Ascending aorta (tissue), 2 donors: ENCODE measurements at regions of chr14 and their contacts with region 1.

Region 1: GRCh38 chr14:52299692-52300278 is 14.3 kb upstream of the PTGER2 start:
- DNase-seq: no peak
- H3K4me3 ChIP-seq: no peak overlapping the region
- H3K27ac ChIP-seq: no peak overlapping the region
- H3K4me1 ChIP-seq: no peaks in the 10 kb centered on the region
- H3K27me3 ChIP-seq: no peaks in the 10 kb centered on the region
- CTCF ChIP-seq: peak; percentile 49 to 74 (median 52)

Region 2: DNA sequence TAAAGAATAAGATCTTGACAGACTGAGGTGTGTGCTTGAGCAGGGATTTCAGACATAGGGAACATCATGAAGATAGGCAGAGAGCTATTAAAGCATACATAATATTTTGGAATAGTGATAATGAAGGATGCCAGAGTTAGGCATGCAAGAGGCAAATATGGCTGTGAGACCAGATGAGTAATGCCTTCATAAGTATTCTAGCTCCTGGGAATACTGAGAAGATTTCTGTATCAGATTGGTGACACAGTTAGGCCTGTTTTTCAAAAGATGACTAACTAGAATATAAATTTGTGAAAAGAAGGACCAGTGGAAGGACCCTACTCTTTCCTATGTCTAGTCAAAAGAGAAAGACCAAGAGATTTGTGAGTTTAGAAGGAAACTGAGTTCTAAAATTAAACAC is 143.7 kb after region 1 on chr14:
- intact Hi-C with region 1: no loop called
- DNase-seq: no peak
- H3K4me3 ChIP-seq: no peak overlapping the region
- H3K27ac ChIP-seq: no peak overlapping the region
- H3K4me1 ChIP-seq: no peaks in the 10 kb centered on the region
- H3K27me3 ChIP-seq: no peaks in the 10 kb centered on the region
- CTCF ChIP-seq: no peak

Region 3: DNA sequence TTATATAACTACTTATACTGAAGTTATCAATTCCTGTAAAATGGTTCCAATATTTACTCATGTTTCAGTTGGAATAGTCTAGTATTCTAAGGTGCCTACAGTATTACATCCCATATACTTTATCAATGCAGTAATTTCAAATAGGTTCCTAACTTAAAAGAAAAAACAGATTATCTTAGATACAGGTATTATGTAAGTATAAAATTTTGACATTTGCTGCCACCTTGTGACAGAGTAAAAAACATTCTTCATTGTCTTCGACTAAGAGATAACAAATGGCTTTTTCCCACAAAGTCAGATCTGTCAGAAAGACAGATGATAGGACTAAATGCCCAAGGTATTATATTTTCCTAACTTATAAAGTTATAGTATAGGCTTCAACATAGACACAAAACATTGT is 173.8 kb after region 1 on chr14:
- intact Hi-C with region 1: loop called (anchors 1 kb)
- DNase-seq: no peak
- H3K4me3 ChIP-seq: no peak overlapping the region
- H3K27ac ChIP-seq: no peak overlapping the region
- H3K4me1 ChIP-seq: no peaks in the 10 kb centered on the region
- H3K27me3 ChIP-seq: no peaks in the 10 kb centered on the region
- CTCF ChIP-seq: peak; percentile 17 to 31 (median 21)

Region 4: DNA sequence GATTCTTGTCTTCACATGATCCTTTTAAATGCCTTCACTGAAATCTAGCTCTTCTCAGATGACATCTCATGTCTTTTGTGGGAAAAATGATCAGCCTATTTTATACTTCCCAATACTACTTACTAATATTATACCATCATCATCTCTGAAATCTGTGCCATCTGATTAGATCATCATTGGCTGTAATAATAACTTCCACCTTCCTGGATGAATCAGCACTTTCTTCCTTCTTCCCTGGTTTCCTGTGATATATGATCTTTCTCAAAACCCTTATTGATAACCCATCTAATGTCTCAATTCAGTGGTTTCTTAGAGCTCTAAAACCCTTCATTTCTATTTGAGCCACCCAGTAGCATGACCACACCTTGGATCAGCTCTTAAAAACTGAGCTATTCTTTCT is 283.8 kb after region 1 on chr14:
- intact Hi-C with region 1: no loop called
- DNase-seq: no peak
- H3K4me3 ChIP-seq: no peak overlapping the region
- H3K27ac ChIP-seq: no peak overlapping the region
- H3K4me1 ChIP-seq: no peaks in the 10 kb centered on the region
- H3K27me3 ChIP-seq: no peaks in the 10 kb centered on the region
- CTCF ChIP-seq: no peak